Mammary epithelial cell (primary cell): ENCODE measurements at regions of chr17 and their contacts with region 1.

Region 1: DNA sequence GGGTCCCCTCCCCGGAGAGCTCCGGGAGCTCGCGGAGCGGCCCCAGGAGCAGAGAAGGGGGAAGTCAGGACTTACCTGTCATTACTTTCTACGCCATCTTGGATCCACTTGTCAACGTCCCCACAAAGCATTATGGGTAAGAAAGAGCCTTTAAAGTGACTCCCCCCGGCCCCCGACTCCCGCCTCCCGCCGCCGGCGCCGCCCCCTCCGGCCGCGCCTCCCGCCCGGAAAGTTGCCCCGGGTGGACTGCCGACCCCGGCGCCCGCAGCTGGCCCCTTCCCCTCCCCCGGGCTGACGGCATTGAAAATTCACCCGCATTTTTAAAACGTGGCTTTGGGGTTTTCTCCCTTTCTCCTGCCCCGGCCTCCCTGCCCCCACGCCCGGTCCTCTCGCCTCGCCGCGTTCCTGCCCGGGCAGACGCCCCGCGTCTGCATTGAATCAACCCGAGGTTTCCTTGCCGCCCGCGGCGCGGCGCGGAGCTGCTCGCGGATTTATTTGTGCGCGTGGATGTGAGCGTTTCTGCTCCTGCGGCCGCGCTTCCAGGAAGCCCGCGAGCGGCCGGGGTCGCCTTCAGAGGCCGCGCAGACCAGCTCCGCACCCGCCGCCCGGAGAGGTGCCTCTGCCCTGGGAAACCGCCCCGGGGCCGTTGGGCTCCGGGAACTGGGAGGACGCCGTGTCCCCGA is at the start of gene HELZ:
- DNase-seq: peak; percentile 78
- H3K4me3 ChIP-seq: peak within 1 kb of the TSS; percentile 89 to 98 (median 91)
- H3K27ac ChIP-seq: peak within 1 kb of the TSS; percentile 89
- H3K4me1 ChIP-seq: peaks cover 19% of the 10 kb centered on the region
- H3K27me3 ChIP-seq: no peaks in the 10 kb centered on the region
- CTCF ChIP-seq: no peak
- total RNA-seq, gene HELZ: 51.3 to 62.5 TPM

Region 2: GRCh38 chr17:67276075-67276474 is 30.9 kb after region 1 on chr17:
- CTCF ChIA-PET with region 1: no interaction called
- dilution Hi-C with region 1: no loop called
- in situ Hi-C with region 1: no loop called
- intact Hi-C with region 1: loop called (anchors 2 kb)
- DNase-seq: no peak
- H3K4me3 ChIP-seq: no peak overlapping the region
- H3K27ac ChIP-seq: no peak overlapping the region
- H3K4me1 ChIP-seq: peaks cover 12% of the 10 kb centered on the region
- H3K27me3 ChIP-seq: no peaks in the 10 kb centered on the region
- CTCF ChIP-seq: peak; percentile 13 to 50

Region 3: GRCh38 chr17:67336859-67337258 is 91.6 kb after region 1 on chr17:
- CTCF ChIA-PET with region 1: no interaction called
- dilution Hi-C with region 1: no loop called
- in situ Hi-C with region 1: no loop called
- intact Hi-C with region 1: loop called (anchors 5 kb)
- DNase-seq: no peak
- H3K4me3 ChIP-seq: no peak overlapping the region
- H3K27ac ChIP-seq: no peak overlapping the region
- H3K4me1 ChIP-seq: peaks cover 6% of the 10 kb centered on the region
- H3K27me3 ChIP-seq: no peaks in the 10 kb centered on the region
- CTCF ChIP-seq: no peak

Region 4: GRCh38 chr17:67366193-67367157 is 121.3 kb after region 1 on chr17 and contains the start of gene PSMD12:
- CTCF ChIA-PET with region 1: no interaction called
- dilution Hi-C with region 1: no loop called
- in situ Hi-C with region 1: no loop called
- intact Hi-C with region 1: loop called (anchors 1 kb)
- DNase-seq: peak; percentile 85
- H3K4me3 ChIP-seq: peak within 1 kb of the TSS; percentile 62 to 99 (median 80)
- H3K27ac ChIP-seq: peak within 1 kb of the TSS; percentile 94
- H3K4me1 ChIP-seq: peaks cover 16% of the 10 kb centered on the region
- H3K27me3 ChIP-seq: no peaks in the 10 kb centered on the region
- CTCF ChIP-seq: peak in 1 of 2 donors; percentile 17
- total RNA-seq, gene PSMD12: 31.5 to 92.1 TPM

Region 5: DNA sequence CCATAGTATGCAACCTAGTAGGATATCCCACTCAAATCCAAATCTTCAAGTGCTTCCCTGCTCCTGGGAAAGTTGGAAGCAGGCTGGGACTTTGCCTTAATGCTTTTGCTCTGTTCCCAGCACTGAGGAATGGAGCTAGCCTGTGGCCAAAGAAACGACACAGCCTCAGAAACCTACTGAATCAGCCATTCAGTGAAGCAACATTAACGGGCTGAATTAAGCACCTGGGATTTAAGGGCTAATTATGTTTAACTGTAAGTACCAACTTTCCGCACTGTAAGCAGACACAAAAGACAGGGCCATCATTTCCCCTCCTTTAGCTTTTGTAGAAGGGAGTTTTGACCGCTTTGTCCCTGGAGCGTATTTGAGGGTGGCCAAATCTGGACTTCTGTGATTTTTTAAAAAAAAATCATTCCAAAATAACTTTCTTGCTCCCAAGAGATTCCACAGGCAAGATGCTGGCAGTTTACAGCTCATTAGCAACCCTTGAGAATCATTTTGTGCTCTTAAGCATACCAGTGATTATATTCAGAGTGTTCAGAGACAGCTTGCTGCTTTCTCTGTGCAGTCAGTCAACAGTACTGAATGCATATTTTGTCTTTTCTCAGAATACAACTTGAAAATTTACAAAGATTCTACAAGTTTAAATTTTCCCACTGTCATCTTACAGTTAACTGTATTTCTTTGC is 455.0 kb after region 1 on chr17:
- CTCF ChIA-PET with region 1: no interaction called
- dilution Hi-C with region 1: no loop called
- in situ Hi-C with region 1: no loop called
- intact Hi-C with region 1: no loop called
- DNase-seq: no peak
- H3K4me3 ChIP-seq: no peak overlapping the region
- H3K27ac ChIP-seq: no peak overlapping the region
- H3K4me1 ChIP-seq: no peaks in the 10 kb centered on the region
- H3K27me3 ChIP-seq: no peaks in the 10 kb centered on the region
- CTCF ChIP-seq: no peak